Mammary epithelial cell (primary cell): ENCODE measurements at regions of chr16 and their contacts with region 1.

Region 1: DNA sequence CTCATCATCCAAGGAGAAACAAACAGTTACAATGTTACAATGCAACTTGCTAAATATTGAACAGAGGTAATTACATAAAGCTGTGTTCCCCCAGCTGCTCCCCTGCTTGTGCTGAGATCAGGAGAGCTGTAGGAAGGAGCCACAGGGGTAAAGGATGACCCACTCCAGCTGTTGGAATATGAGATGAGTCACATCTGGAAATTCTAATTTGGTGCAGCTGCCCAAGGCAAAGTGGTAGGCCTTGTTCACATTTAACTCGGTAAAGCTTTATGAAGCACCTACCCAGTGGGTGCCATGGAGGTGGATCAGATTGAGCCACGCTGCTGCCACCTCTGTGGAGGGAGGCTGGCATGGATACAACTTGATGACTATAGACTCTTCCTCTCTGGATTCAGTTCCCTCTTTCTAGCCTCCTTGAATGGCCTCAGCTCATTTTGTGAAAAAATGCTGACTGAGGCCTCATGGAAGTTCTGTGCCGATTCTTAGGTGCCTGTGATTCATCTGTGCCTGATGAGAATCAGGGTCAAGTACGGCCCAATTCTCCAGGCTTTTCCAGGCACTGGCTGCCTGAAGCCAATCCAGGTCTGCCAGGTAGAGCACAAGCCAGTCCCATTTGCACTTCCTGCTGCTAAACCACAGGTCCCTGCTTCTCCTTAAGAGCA is 7.4 kb downstream of the ZNF689 start:
- DNase-seq: no peak
- H3K4me3 ChIP-seq: no peak overlapping the region
- H3K27ac ChIP-seq: no peak overlapping the region
- H3K4me1 ChIP-seq: peaks cover 3% of the 10 kb centered on the region
- H3K27me3 ChIP-seq: no peaks in the 10 kb centered on the region
- CTCF ChIP-seq: no peak

Region 2: GRCh38 chr16:30526823-30527635 is 75.7 kb before region 1 on chr16:
- CTCF ChIA-PET with region 1: interaction called, 8 read pairs
- dilution Hi-C with region 1: no loop called
- in situ Hi-C with region 1: no loop called
- intact Hi-C with region 1: loop called (anchors 2 kb)
- DNase-seq: peak; percentile 98
- H3K4me3 ChIP-seq: peak overlapping the region; percentile 65 to 96 (median 90)
- H3K27ac ChIP-seq: peak overlapping the region; percentile 88
- H3K4me1 ChIP-seq: peaks cover 18% of the 10 kb centered on the region
- H3K27me3 ChIP-seq: no peaks in the 10 kb centered on the region
- CTCF ChIP-seq: peak in 1 of 2 donors; percentile 42

Region 3: DNA sequence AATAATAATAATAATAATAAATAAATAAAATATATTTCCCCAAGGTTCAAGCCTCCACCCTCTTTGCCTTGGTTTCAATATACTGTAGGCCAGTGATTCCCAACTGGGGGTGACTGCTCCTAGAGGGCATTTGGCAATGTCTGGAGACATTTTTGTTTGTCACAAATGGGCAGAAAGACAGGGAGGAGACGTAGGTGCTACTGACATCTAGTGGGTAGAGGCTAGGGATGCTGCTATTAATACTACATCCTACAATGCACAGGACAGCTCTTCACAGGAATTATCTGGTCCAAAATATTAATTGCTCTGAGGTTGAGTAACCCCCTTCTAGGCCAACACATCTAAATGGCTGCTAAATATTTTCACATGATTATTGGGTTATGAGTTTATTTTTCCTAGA is 35.2 kb after region 1 on chr16:
- CTCF ChIA-PET with region 1: no interaction called
- dilution Hi-C with region 1: loop called (anchors 5 kb)
- in situ Hi-C with region 1: no loop called
- intact Hi-C with region 1: no loop called
- DNase-seq: peak; percentile 54
- H3K4me3 ChIP-seq: no peak overlapping the region
- H3K27ac ChIP-seq: no peak overlapping the region
- H3K4me1 ChIP-seq: no peaks in the 10 kb centered on the region
- H3K27me3 ChIP-seq: no peaks in the 10 kb centered on the region
- CTCF ChIP-seq: peak; percentile 55 to 74